ENCODE measurements at regions of chr12 and their contacts with region 1.

Region 1: DNA sequence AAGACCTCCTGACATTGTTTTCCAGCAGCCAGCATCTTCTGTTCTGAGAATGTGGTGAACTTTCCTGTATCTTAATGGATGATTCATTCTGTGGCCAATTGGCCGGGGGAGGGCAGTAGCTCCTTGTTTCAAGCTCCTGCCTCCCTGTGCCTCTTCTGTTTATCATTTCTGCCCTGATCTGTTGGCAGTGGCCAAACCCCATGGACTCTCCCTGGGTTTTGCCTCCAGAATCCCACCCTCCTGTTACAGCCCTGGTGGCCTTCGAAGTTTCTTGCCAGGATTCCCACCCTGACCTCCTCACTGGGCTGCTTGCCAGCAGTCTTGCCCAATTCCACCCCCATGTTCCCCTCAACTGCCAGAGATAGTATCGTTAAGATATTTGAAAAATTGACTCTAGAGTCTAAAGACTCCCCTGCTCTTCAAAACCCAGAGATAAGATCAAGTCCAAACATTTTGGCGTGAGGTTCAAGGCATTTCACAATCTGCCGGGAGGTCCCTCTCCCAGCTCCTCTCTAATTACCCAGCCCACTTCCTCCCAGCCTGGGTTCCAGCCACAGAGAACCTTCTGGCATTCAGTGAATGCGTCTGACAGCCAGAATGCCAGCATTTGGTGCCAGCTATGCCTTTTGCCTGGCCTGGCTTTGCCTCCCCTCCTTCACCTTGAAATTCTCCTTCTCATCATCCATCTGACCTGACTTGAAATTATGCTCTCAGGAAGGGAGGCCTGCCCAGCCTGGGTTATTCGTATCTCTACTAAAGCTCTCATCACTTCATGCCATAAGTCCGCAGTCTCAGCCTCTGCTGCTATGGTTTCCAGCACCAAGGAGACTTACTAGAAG is 37.7 kb upstream of the TXNRD1 start:
- DNase-seq: peak; percentile 81 to 95
- ATAC-seq: peak; percentile 89 to 92
- H3K4me3 ChIP-seq: no peak overlapping the region; the same call in 2 of the 3 replicates
- H3K27ac ChIP-seq: peak overlapping the region; percentile 85 to 89
- H3K4me1 ChIP-seq: peaks cover 74% of the 10 kb centered on the region
- CTCF ChIP-seq: peak; percentile 70
- EP300 ChIP-seq: peak; percentile 78 to 95
- POLR2A ChIP-seq: no peak
- RAD21 ChIP-seq: peak; percentile 85 to 87

Region 2: DNA sequence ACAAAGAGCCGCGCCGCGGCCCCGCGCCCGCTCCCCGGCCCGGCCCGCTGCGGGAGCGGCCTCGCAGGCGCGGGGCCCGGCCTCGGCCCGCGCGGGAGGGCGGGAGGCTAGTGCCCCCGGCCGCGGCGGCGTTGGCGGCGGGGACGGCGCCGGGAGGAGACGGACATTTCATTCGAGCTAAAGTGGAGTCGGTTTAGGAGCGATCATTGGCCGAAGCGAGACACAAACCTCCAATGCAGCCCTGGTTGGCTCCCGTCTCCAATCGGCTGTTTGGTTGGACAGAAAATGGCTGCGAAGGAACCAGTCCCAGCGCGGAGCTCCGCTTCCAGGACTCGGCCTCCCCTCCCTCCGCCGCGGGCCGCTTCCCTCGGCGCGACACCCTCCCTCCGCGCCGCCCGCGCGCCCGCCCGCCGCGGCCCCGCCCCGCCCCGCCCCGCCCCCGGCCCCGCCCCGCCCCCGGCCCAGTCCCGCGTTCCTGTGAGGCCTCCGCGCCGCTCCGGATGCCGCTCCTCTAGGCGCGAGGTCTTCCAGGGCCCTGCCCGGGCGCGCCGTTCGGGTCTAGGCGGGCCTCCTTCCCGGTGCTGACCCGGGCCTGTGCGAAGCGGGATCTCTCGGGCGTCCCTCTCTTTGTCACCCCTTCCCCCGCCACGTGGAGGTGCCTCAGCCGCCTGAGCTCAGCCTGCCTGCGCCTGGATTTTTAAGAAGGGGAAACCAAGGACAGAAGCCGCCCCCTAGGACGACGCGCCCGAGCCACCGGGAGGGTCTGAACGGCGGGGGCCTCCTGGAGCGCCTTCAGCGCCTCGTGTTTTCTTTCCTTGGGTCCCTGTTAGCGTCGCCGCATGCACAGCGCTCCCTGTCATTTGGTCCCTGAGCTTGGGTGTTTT is 39.7 kb before region 1 on chr12 and contains the start of gene NFYB:
- CTCF ChIA-PET with region 1: interaction called, 3 read pairs
- POLR2A ChIA-PET with region 1: interaction called, 13 read pairs
- DNase-seq: peak; percentile 98
- ATAC-seq: peak; percentile 94 to 95
- H3K4me3 ChIP-seq: peak within 1 kb of the TSS; percentile 89
- H3K27ac ChIP-seq: peak within 1 kb of the TSS; percentile 93 to 94
- H3K4me1 ChIP-seq: peaks cover 44% of the 10 kb centered on the region
- CTCF ChIP-seq: no peak
- EP300 ChIP-seq: no peak
- POLR2A ChIP-seq: peak; percentile 87
- RAD21 ChIP-seq: no peak
- polyA plus RNA-seq, gene NFYB: 40.0 and 70.2 TPM in 2 replicates

Region 3: GRCh38 chr12:104201238-104202001 is 23.5 kb after region 1 on chr12:
- CTCF ChIA-PET with region 1: interaction called, 10 read pairs
- POLR2A ChIA-PET with region 1: no interaction called
- DNase-seq: peak; percentile 65 to 86
- ATAC-seq: peak; percentile 91 to 93
- H3K4me3 ChIP-seq: no peak overlapping the region
- H3K27ac ChIP-seq: peak overlapping the region; percentile 47 to 74
- H3K4me1 ChIP-seq: 0 out of 3 replicates have a peak, but pooled peaks cover 3% of the 10 kb centered on the region
- CTCF ChIP-seq: peak; percentile 87
- EP300 ChIP-seq: no peak
- POLR2A ChIP-seq: no peak
- RAD21 ChIP-seq: peak; percentile 96 to 99

Region 4: DNA sequence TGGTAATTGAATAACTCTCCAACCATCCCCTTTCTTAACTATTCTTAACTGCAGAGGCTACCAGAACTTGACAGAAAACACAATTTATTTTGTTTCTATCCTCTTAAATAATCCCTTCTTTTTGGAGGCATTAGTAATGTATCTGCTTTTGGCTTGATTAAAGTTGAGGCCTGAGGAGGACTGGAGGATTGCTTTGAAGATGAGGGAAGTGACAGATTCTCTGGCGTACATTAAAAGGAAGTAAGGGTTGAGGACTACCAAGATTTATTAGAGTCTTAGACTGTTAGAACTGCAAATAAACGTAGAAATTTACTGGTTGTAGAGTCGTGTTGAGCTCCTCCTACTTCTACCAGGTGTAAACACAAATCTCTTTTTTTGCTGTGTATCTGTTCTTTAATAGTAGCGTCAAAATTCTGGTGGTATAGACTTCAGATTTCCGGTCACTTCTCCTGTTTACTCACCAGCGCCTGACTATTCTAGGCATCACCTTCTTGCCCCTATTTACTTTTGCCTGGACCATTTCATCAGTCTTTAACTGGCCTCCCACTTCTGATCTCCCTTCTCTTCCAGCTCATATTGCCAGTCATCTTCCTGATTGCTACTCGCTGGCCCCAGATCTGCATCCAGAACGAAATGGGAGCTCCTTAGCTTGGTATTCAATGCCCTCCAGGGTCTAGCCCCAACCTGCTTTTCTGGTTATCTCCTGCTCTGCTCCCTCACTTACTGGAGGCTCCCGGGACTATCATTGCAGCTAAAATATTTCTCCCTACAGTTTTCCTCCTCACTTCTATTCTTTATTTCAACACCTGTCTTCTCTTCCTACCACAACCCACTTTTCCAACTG is 117.2 kb after region 1 on chr12:
- CTCF ChIA-PET with region 1: no interaction called
- POLR2A ChIA-PET with region 1: interaction called, 13 read pairs
- DNase-seq: peak in 1 of 2 experiments; percentile 53
- ATAC-seq: peak; percentile 8 to 23
- H3K4me3 ChIP-seq: peak overlapping the region; percentile 68
- H3K27ac ChIP-seq: peak overlapping the region; percentile 94 to 98
- H3K4me1 ChIP-seq: peaks cover 75% of the 10 kb centered on the region
- CTCF ChIP-seq: no peak
- EP300 ChIP-seq: no peak
- POLR2A ChIP-seq: no peak
- RAD21 ChIP-seq: no peak